PC-9 (cell line): ENCODE measurements at regions of chr12 and their contacts with region 1.

Region 1: DNA sequence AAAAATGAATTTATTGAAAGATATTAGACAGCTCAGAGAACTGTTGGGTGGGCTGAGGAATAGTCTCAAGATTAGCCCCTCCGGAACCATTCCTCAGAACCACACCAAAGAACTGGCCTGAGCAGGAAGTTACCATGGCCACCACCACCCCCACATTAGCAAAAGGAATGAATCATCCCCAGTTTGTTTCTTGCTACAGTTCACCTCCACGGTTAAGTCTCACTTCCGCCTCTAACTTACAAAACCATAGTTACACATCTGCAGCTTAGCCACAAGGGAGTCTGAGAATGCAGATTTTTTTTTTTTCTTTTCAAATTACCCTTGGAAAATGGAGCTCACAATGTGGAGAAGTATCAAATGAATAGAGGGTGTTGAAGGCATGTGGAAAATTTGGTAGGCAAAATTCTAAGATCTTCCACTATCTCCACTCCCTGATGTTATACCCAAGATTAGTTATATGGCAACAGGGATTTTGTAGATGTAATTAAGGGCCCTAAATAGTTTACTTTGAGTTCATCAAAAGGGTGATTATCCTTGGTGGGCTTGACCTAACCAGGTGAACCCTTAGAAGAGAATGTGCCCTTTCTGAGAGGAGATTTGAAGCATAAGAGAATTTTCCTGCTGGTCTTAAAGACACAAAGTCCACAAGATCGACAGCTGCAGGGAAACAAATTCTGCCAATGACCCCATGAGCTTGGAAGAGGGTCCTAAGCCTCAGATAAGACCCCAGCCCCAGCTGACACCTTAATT is 129.8 kb upstream of the KRR1 start:
- DNase-seq: peak in 1 of 2 experiments; percentile 13
- H3K4me3 ChIP-seq: no peak overlapping the region
- H3K27ac ChIP-seq: no peak overlapping the region
- H3K4me1 ChIP-seq: peaks cover 3% of the 10 kb centered on the region
- H3K27me3 ChIP-seq: no peaks in the 10 kb centered on the region
- CTCF ChIP-seq: no peak

Region 2: GRCh38 chr12:75511116-75512048 is 129.8 kb before region 1 on chr12 and contains the start of gene KRR1:
- CTCF ChIA-PET with region 1: no interaction called
- POLR2A ChIA-PET with region 1: no interaction called
- intact Hi-C with region 1: no loop called
- DNase-seq: peak; percentile 81 to 92
- H3K4me3 ChIP-seq: peak within 1 kb of the TSS; percentile 91
- H3K27ac ChIP-seq: peak within 1 kb of the TSS; percentile 59
- H3K4me1 ChIP-seq: peaks cover 24% of the 10 kb centered on the region
- H3K27me3 ChIP-seq: no peaks in the 10 kb centered on the region
- CTCF ChIP-seq: no peak
- total RNA-seq, gene KRR1: 41.6 and 45.9 TPM in 2 replicates

Region 3: GRCh38 chr12:75954041-75954440 is 312.8 kb after region 1 on chr12:
- CTCF ChIA-PET with region 1: interaction called, 10 read pairs
- POLR2A ChIA-PET with region 1: no interaction called
- intact Hi-C with region 1: no loop called
- DNase-seq: peak; percentile 57 to 99
- H3K4me3 ChIP-seq: peak overlapping the region; percentile 19; the same call in 1 of the 2 replicates
- H3K27ac ChIP-seq: peak overlapping the region; percentile 97
- H3K4me1 ChIP-seq: peaks cover 67% of the 10 kb centered on the region
- H3K27me3 ChIP-seq: no peaks in the 10 kb centered on the region
- CTCF ChIP-seq: no peak

Region 4: DNA sequence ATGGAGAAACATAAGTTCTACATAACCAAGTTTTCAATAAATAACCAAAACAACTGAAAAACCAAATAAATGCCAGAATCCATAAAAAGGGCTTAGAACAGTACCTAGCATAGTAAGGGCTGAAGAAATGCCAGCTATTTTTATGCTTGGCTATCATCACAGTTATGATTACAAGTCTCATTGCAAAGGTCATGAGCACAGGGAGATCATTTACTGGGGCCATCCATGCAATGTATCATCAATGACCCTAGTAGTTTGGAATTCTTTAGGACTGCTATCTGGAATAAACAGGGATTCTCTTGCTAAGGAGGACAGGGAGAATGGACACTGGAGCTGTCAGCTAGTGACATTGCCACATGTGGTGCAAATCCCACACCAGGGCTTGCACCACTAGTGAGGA is 535.7 kb after region 1 on chr12:
- CTCF ChIA-PET with region 1: no interaction called
- POLR2A ChIA-PET with region 1: no interaction called
- intact Hi-C with region 1: no loop called
- DNase-seq: no peak
- H3K4me3 ChIP-seq: no peak overlapping the region
- H3K27ac ChIP-seq: no peak overlapping the region
- H3K4me1 ChIP-seq: no peaks in the 10 kb centered on the region
- H3K27me3 ChIP-seq: no peaks in the 10 kb centered on the region
- CTCF ChIP-seq: no peak